Heart left ventricle (tissue), 16 donors: ENCODE measurements at regions of chr22 and their contacts with region 1.

Region 1: GRCh38 chr22:24338726-24339451 is 68.3 kb downstream of the SPECC1L start:
- DNase-seq: peak in 3 of 5 donors; percentile 21 to 41 (median 38)
- ATAC-seq: peak; percentile 63 to 93 (median 92)
- H3K4me3 ChIP-seq: no peak overlapping the region
- H3K27ac ChIP-seq: peak overlapping the region in 11 of 12 donors; percentile 13 to 68 (median 51)
- H3K4me1 ChIP-seq: peaks cover 0 to 21% (median 10%) of the 10 kb centered on the region in 12 donors
- H3K27me3 ChIP-seq: no peaks in the 10 kb centered on the region
- CTCF ChIP-seq: no peak
- POLR2A ChIP-seq: no peak

Region 2: DNA sequence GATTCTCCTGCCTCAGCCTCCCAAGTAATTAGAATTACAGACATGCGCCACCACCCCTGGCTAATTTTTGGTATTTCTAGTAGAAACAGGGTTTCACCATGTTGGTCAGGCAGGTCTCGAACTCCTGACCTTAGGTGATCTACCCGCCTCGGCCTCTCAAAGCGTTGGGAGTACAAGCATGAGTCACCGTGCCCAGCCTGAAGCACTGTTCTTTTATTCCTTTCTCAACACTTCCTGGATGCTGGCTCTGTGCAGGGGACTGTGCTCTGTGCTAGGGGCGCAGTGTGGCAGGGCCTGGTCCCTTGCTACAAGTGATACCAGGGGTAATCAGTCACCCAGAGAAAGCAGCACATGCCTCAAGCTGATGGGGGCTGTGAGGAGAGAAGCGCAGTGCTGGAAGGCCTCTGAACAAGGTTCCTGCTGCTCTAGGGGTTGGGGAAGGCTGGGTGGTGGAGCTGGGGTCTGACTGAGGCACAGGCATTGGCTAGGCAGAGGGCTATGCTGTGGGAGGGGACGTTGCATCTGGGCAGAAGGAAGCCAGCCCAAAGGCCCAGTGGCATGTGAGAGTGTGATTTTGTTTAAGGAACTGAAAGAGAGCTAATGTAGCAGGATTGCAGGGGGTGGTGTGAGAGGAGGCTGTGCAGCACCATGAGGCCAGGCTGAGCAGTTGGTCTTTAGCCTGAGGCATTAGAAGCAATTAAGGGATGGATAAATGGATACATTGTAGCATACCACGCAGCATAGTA is 285.2 kb before region 1 on chr22:
- intact Hi-C with region 1: no loop called
- DNase-seq: no peak
- ATAC-seq: no peak
- H3K4me3 ChIP-seq: no peak overlapping the region
- H3K27ac ChIP-seq: no peak overlapping the region
- H3K4me1 ChIP-seq: peaks cover 0 to 31% (median 3%) of the 10 kb centered on the region in 12 donors
- H3K27me3 ChIP-seq: no peaks in the 10 kb centered on the region
- CTCF ChIP-seq: no peak
- POLR2A ChIP-seq: no peak

Region 3: GRCh38 chr22:24379536-24379935 is 40.6 kb after region 1 on chr22:
- intact Hi-C with region 1: loop called in 1 of 10 experiments (anchors 5 kb)
- DNase-seq: no peak
- ATAC-seq: no peak
- H3K4me3 ChIP-seq: no peak overlapping the region
- H3K27ac ChIP-seq: peak overlapping the region in 2 of 12 donors; percentile 12 to 35
- H3K4me1 ChIP-seq: peaks cover 0 to 20% (median 5%) of the 10 kb centered on the region in 12 donors
- H3K27me3 ChIP-seq: no peaks in the 10 kb centered on the region
- CTCF ChIP-seq: no peak
- POLR2A ChIP-seq: no peak

Region 4: GRCh38 chr22:24402460-24403192 is 63.7 kb after region 1 on chr22:
- intact Hi-C with region 1: loop called in 1 of 10 experiments (anchors 10 kb)
- DNase-seq: peak; percentile 80 to 91 (median 87)
- ATAC-seq: peak; percentile 91 to 94 (median 93)
- H3K4me3 ChIP-seq: peak overlapping the region in 5 of 12 donors; percentile 14 to 37 (median 21)
- H3K27ac ChIP-seq: peak overlapping the region; percentile 47 to 93 (median 82)
- H3K4me1 ChIP-seq: peaks cover 0 to 72% (median 64%) of the 10 kb centered on the region in 12 donors
- H3K27me3 ChIP-seq: no peaks in the 10 kb centered on the region
- CTCF ChIP-seq: no peak
- POLR2A ChIP-seq: no peak

Region 5: DNA sequence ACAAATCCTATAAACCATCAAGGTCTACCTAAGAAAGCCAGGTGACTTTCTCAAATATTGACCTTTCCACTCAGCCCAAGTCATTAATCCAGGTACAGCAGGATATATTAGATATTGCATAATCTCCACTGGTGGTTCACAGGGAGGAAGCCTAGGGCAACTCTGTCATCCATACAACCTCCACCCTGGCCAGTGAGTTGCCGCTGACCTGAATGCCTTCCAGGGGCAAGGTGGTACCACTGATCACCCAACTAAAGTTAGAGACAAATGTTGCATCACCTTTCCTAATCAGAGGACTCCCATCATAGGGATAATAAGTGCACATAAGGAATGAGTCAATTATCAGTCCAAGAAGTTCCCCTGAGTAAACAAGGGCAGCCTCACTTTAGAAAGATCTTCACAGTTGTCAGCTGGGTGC is 193.2 kb after region 1 on chr22:
- intact Hi-C with region 1: no loop called
- DNase-seq: no peak
- ATAC-seq: no peak
- H3K4me3 ChIP-seq: no peak overlapping the region
- H3K27ac ChIP-seq: no peak overlapping the region
- H3K4me1 ChIP-seq: peaks cover 0 to 8% (median 0%) of the 10 kb centered on the region in 12 donors
- H3K27me3 ChIP-seq: no peaks in the 10 kb centered on the region
- CTCF ChIP-seq: no peak
- POLR2A ChIP-seq: no peak